ENCODE measurements at regions of chr17 and their contacts with region 1.

Region 1: GRCh38 chr17:67824735-67825626 is at the start of gene BPTF:
- DNase-seq: peak; percentile 88 to 94 (median 89)
- H3K4me3 ChIP-seq: peak within 1 kb of the TSS; percentile 86
- H3K4me3 Mint-ChIP-seq: peak within 1 kb of the TSS; percentile 91 to 100 (median 99)
- H3K27ac ChIP-seq: peak within 1 kb of the TSS; percentile 72
- H3K27ac Mint-ChIP-seq: peak within 1 kb of the TSS; percentile 95 to 99 (median 98)
- H3K4me1 ChIP-seq: peaks cover 27% of the 10 kb centered on the region
- H3K4me1 Mint-ChIP-seq: peaks cover 32 to 41% (median 39%) of the 10 kb centered on the region in 3 donors
- H3K27me3 ChIP-seq: no peaks in the 10 kb centered on the region
- H3K27me3 Mint-ChIP-seq: peaks cover 0 to 5% of the 10 kb centered on the region in 2 donors
- total RNA-seq, gene BPTF: 78.8 to 82.4 TPM

Region 2: GRCh38 chr17:67717624-67718329 is 107.2 kb before region 1 on chr17 and contains the start of gene NOL11:
- CTCF ChIA-PET with region 1: interaction called, 4 read pairs
- POLR2A ChIA-PET with region 1: interaction called, 12 read pairs
- DNase-seq: peak; percentile 99 to 100 (median 99)
- H3K4me3 ChIP-seq: peak within 1 kb of the TSS; percentile 92
- H3K4me3 Mint-ChIP-seq: peak within 1 kb of the TSS; percentile 98 to 100 (median 99)
- H3K27ac ChIP-seq: peak within 1 kb of the TSS; percentile 88
- H3K27ac Mint-ChIP-seq: peak within 1 kb of the TSS; percentile 96 to 100 (median 98)
- H3K4me1 ChIP-seq: peaks cover 19% of the 10 kb centered on the region
- H3K4me1 Mint-ChIP-seq: peaks cover 21 to 38% (median 36%) of the 10 kb centered on the region in 3 donors
- H3K27me3 ChIP-seq: no peaks in the 10 kb centered on the region
- H3K27me3 Mint-ChIP-seq: peaks cover 7% of the 10 kb centered on the region in 2 donors
- total RNA-seq, gene NOL11: 106 to 111 TPM

Region 3: GRCh38 chr17:67813803-67814180 is 11.2 kb before region 1 on chr17:
- CTCF ChIA-PET with region 1: no interaction called
- POLR2A ChIA-PET with region 1: no interaction called
- DNase-seq: no peak
- H3K4me3 ChIP-seq: no peak overlapping the region
- H3K4me3 Mint-ChIP-seq: no peak overlapping the region
- H3K27ac ChIP-seq: no peak overlapping the region
- H3K27ac Mint-ChIP-seq: no peak overlapping the region
- H3K4me1 ChIP-seq: no peaks in the 10 kb centered on the region
- H3K4me1 Mint-ChIP-seq: no peaks in the 10 kb centered on the region
- H3K27me3 ChIP-seq: no peaks in the 10 kb centered on the region
- H3K27me3 Mint-ChIP-seq: peaks cover 15 to 32% of the 10 kb centered on the region in 2 donors

Region 4: GRCh38 chr17:68238164-68238872 is 413.3 kb after region 1 on chr17:
- CTCF ChIA-PET with region 1: no interaction called
- POLR2A ChIA-PET with region 1: interaction called, 16 read pairs
- DNase-seq: peak in 3 of 5 donors; percentile 22 to 66 (median 45)
- H3K4me3 ChIP-seq: peak overlapping the region; percentile 42
- H3K4me3 Mint-ChIP-seq: peak overlapping the region; percentile 58 to 91 (median 86)
- H3K27ac ChIP-seq: peak overlapping the region; percentile 82
- H3K27ac Mint-ChIP-seq: peak overlapping the region; percentile 93 to 100 (median 99)
- H3K4me1 ChIP-seq: peaks cover 54% of the 10 kb centered on the region
- H3K4me1 Mint-ChIP-seq: peaks cover 53 to 75% (median 71%) of the 10 kb centered on the region in 3 donors
- H3K27me3 ChIP-seq: no peaks in the 10 kb centered on the region
- H3K27me3 Mint-ChIP-seq: no peaks in the 10 kb centered on the region

Measured in CD8-positive, alpha-beta memory T cell (primary cell).